ENCODE measurements at regions of chr12 and their contacts with region 1.

Region 1: DNA sequence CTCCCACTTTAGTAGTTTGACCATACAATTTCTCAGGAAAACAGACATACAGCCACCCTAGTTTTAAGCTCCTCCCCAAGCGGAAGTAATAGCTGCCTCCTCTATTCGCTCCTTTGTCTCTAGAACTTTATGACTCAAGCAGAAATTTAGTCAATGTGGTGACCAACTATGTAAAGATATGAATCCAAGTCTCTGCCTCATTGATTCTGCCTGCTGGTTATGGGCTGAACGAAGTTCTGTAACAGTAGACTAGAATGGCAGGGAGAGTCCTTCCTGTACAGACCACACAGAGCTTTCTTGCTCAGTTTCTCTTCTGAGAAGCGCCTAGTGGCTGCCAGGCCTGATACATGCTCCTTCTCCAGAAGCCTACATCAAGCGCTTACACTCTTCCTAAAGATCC is 19.1 kb downstream of the KICS2 start:
- DNase-seq: no peak
- ATAC-seq: no peak
- H3K4me3 ChIP-seq: no peak overlapping the region
- H3K27ac ChIP-seq: no peak overlapping the region
- H3K4me1 ChIP-seq: no peaks in the 10 kb centered on the region
- H3K27me3 ChIP-seq: no peaks in the 10 kb centered on the region
- CTCF ChIP-seq: no peak

Region 2: DNA sequence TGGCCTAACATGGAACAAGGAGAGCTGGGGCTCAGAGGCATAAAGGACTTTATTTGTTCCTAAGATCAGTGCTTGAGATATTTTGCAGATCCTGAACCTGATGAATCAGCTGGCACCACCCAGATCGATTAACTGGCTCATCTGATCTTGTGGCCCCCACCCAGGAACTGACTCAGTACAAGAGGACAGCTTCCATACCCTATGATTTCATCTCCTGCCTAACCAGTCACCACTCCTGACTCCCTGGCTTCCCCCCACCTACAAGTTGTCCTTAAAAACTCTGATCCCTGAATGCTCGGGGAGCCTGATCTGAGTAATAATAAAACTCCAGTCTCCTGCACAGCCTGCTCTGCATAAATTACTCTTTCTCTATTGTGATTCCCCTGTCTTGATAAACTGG is 182.4 kb after region 1 on chr12:
- CTCF ChIA-PET with region 1: no interaction called
- POLR2A ChIA-PET with region 1: interaction called, 17 read pairs
- in situ Hi-C with region 1: no loop called
- intact Hi-C with region 1: no loop called
- DNase-seq: no peak
- ATAC-seq: no peak
- H3K4me3 ChIP-seq: no peak overlapping the region
- H3K27ac ChIP-seq: no peak overlapping the region
- H3K4me1 ChIP-seq: peaks cover 3% of the 10 kb centered on the region; the same call in 1 of the 2 replicates
- H3K27me3 ChIP-seq: no peaks in the 10 kb centered on the region
- CTCF ChIP-seq: no peak

Measured in Panc1 (cell line).